Right cardiac atrium (tissue), 5 donors: ENCODE measurements at regions of chr17 and their contacts with region 1.

Region 1: DNA sequence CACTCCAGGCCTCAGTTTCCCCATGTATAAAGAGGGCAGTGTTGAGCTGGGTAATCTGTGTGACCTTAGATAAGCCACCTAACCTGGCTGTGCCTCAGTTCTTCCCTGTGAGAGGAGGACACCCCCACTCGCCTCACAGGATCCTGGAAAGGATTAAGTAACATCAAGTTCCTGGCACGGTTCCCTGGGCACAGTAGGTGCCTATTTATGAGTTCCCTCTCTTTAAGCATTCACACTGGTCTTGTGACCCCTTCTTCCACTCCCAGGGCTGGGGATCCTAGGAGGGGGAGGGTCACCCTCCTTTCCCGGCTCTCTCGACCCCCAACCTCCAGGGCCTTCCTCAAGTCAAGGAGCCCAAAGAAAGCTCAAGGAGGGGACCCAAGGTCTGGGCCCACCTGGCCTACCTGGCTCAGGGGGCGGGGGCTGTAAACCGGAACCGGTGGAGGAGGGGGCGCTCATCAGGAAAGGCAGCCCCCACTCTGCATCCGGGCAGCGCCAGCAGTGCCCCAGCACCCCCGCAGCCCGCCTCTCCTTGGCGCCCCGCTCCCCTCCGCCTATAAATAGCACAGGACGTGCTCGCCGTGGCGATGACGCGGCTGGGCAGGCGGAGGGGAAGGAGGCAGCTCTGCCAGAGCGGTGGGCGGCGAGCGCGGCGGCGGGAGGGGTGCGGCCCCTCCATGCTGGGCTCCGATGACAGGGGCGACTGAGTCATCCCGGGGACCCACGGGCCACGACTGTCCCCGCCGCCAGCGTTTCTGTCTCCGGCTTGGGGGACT is 9.4 kb downstream of the RPL19 start:
- DNase-seq: peak; percentile 83 to 88 (median 87)
- ATAC-seq: peak; percentile 58 to 78
- H3K4me3 ChIP-seq: peak overlapping the region; percentile 6
- H3K27ac ChIP-seq: peak overlapping the region; percentile 32
- H3K4me1 ChIP-seq: peaks cover 4% of the 10 kb centered on the region
- H3K27me3 ChIP-seq: no peaks in the 10 kb centered on the region

Region 2: GRCh38 chr17:39244600-39245570 is 35.4 kb after region 1 on chr17:
- intact Hi-C with region 1: loop called in 2 of 4 experiments (anchors 5 to 10 kb)
- DNase-seq: peak; percentile 79 to 93 (median 90)
- ATAC-seq: peak; percentile 88 to 90
- H3K4me3 ChIP-seq: no peak overlapping the region
- H3K27ac ChIP-seq: no peak overlapping the region
- H3K4me1 ChIP-seq: no peaks in the 10 kb centered on the region
- H3K27me3 ChIP-seq: no peaks in the 10 kb centered on the region

Region 3: DNA sequence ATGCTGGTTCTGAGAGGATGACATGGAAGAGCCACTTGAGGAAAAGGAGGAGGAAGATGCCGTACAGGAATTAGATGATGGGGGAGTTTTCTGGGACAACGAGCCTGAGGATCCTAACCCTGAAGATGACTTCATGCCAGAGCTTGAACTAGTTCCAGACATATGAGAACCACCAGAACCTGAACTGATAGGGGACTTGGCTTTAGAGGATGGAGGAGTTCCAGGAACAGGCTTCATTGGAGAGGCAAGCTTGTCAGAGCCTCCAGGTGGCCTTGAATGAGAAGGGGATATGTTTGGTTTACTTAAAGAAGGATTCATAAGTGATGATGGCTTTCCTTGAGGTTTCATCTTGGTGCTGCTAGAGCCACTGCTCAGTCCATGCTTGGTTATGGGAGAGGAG is 198.9 kb after region 1 on chr17:
- intact Hi-C with region 1: no loop called
- DNase-seq: no peak
- ATAC-seq: no peak
- H3K4me3 ChIP-seq: no peak overlapping the region
- H3K27ac ChIP-seq: no peak overlapping the region
- H3K4me1 ChIP-seq: no peaks in the 10 kb centered on the region
- H3K27me3 ChIP-seq: no peaks in the 10 kb centered on the region